Activated CD4-positive, alpha-beta memory T cell treated with anti-CD3 and anti-CD28 coated beads for 36 hours (primary cell): ENCODE measurements at regions of chr2 and their contacts with region 1.

Region 1: GRCh38 chr2:230326453-230327417 is at the start of gene SP140L:
- DNase-seq: peak; percentile 87
- H3K4me3 Mint-ChIP-seq: peak within 1 kb of the TSS; percentile 88
- H3K27ac Mint-ChIP-seq: peak within 1 kb of the TSS; percentile 94
- H3K4me1 Mint-ChIP-seq: peaks cover 56% of the 10 kb centered on the region
- H3K27me3 Mint-ChIP-seq: no peaks in the 10 kb centered on the region
- total RNA-seq, gene SP140L: 41.9 to 44.1 TPM

Region 2: GRCh38 chr2:230286048-230286447 is 40.7 kb before region 1 on chr2:
- CTCF ChIA-PET with region 1: no interaction called
- POLR2A ChIA-PET with region 1: interaction called, 3 read pairs
- intact Hi-C with region 1: loop called (anchors 5 kb)
- DNase-seq: no peak
- H3K4me3 Mint-ChIP-seq: no peak overlapping the region
- H3K27ac Mint-ChIP-seq: no peak overlapping the region
- H3K4me1 Mint-ChIP-seq: peaks cover 29% of the 10 kb centered on the region
- H3K27me3 Mint-ChIP-seq: no peaks in the 10 kb centered on the region

Region 3: DNA sequence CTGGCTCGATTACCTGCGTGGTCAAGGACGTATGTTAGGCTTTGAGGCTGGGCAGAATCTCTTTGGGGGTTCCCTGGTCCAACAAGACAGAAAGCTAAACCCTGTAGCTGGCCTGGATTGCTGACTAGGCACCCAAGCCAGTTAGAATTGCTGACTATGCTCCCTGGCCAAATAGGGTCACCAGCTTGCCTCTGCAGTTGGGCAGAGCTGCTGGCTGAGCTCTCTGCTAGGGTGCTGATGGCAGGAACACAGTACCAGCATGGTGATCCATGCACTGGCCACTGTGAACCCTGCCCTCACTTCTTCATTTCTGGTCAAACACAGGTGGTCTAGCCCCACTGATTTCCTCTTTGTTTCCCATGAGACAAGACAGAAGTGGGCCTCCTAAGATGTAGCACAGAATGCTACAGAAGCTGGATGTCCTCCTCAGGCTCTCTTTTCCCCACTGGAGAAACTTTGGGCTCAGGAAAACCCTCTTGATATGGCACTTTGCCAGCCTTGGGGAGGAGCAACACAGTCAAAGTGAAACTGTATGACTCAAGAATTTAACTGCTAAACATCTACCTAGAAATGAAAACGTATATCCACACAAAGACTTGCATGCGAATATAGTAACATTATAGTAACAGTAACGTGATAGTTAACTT is 21.0 kb after region 1 on chr2:
- CTCF ChIA-PET with region 1: interaction called, 5 read pairs
- POLR2A ChIA-PET with region 1: no interaction called
- intact Hi-C with region 1: loop called (anchors 1 kb)
- DNase-seq: peak; percentile 70
- H3K4me3 Mint-ChIP-seq: peak overlapping the region; percentile 47
- H3K27ac Mint-ChIP-seq: peak overlapping the region; percentile 92
- H3K4me1 Mint-ChIP-seq: peaks cover 80% of the 10 kb centered on the region
- H3K27me3 Mint-ChIP-seq: no peaks in the 10 kb centered on the region

Region 4: DNA sequence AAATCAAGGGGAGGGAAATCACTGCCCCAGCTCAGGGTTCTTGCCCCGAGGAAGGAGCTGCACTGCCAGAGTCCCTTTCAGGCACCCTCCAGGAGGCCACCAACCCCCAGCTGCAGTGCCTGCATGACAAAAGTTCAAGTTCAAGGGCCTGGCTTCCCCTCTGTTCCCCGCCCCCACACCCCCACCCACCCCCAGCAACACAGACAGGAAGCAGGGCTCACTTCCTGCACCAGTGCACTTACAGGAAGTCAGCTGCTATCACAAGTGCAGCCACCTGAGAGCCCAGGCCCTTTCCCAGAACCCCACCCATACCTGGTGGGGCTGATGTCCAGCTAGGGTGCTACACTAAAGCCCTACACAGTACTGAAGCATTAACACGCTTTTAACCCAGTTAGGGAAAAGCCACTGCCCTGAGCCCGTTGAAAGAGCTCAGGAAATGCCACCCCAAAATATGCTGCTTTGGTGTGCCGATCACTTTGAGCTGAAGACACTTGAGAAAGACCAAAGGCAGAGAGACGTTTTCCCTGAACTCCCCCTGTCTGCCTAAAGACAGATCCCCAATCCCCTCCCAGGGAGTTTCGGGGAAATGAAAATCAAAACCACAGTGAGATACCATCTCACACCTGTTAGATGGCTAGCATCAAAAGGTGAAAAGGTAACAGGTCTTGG is 276.0 kb after region 1 on chr2:
- CTCF ChIA-PET with region 1: no interaction called
- POLR2A ChIA-PET with region 1: no interaction called
- intact Hi-C with region 1: loop called (anchors 5 kb)
- DNase-seq: peak; percentile 75
- H3K4me3 Mint-ChIP-seq: peak overlapping the region; percentile 31
- H3K27ac Mint-ChIP-seq: peak overlapping the region; percentile 89
- H3K4me1 Mint-ChIP-seq: peaks cover 56% of the 10 kb centered on the region
- H3K27me3 Mint-ChIP-seq: no peaks in the 10 kb centered on the region